Gastrocnemius medialis (tissue), 4 donors: ENCODE measurements at regions of chr13 and their contacts with region 1.

Region 1: DNA sequence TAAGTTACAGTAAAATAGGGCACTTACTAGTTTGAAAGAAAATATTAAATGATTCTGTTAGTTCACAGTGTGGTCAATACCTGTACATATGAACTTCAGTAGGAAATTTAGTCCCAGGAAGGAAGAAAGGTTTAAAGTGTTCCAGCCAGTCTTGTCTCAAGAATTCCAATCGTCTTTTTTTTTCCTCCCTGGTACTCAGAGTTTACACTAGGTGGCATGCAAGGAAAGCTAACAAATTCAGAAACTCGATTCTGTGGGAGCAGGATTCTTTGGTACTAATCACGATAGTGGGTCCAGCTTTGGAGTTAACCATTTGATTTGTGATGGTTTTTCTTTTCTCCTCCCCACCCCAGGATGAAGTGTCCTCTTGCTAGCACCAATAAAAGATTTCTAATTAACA is 43.6 kb downstream of the POLR1D start:
- DNase-seq: no peak
- ATAC-seq: no peak
- H3K4me3 ChIP-seq: no peak overlapping the region
- H3K27ac ChIP-seq: no peak overlapping the region
- H3K4me1 ChIP-seq: peaks cover 15 to 18% of the 10 kb centered on the region in 2 donors
- H3K27me3 ChIP-seq: no peaks in the 10 kb centered on the region
- CTCF ChIP-seq: peak in 1 of 5 experiments; percentile 11
- POLR2A ChIP-seq: no peak

Region 2: GRCh38 chr13:27620377-27621115 is 44.8 kb before region 1 on chr13 and contains the start of gene LNX2:
- in situ Hi-C with region 1: no loop called
- intact Hi-C with region 1: loop called (anchors 1 kb)
- DNase-seq: peak; percentile 98 to 99
- ATAC-seq: peak; percentile 72 to 73
- H3K4me3 ChIP-seq: peak within 1 kb of the TSS; percentile 69 to 98 (median 90)
- H3K27ac ChIP-seq: peak within 1 kb of the TSS; percentile 95 to 100 (median 99)
- H3K4me1 ChIP-seq: peaks cover 30 to 44% of the 10 kb centered on the region in 2 donors
- H3K27me3 ChIP-seq: no peaks in the 10 kb centered on the region
- CTCF ChIP-seq: peak in 2 of 5 experiments; percentile 24 to 29
- POLR2A ChIP-seq: peak; percentile 92 to 94
- total RNA-seq, gene LNX2: 5.0 to 7.1 (median 6.2) TPM

Region 3: DNA sequence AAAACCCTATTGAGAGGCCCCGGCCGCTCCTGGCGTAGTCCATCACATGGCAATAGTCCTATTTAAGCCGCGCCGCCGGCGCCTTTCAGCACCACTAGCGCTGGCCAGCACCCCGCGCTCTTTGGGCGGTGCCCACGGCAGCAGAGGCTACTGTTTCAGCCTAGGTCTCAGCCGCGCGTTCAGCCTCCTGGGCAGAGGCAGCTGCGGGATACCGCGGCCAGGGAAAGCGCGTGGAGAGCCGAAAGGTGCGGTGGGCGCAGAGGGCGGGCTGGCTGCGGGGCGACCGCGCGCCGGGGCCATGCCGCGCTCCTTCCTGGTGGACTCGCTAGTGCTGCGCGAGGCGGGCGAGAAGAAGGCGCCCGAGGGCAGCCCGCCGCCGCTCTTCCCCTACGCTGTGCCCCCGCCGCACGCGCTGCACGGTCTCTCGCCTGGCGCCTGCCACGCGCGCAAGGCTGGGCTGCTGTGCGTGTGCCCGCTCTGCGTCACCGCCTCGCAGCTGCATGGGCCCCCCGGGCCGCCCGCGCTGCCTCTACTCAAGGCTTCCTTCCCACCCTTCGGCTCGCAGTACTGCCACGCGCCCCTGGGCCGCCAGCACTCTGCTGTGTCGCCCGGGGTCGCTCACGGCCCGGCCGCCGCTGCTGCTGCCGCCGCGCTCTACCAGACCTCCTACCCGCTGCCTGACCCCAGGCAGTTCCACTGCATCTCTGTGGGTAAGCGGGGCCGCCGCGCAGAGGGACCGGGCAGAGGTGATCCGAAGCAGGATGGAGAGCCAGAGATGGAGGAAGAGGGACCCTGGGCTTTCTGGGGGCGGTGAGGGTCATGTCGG is 127.3 kb after region 1 on chr13 and contains the start of gene GSX1:
- in situ Hi-C with region 1: no loop called
- intact Hi-C with region 1: loop called (anchors 10 kb)
- DNase-seq: peak in 1 of 2 donors; percentile 19
- ATAC-seq: peak in 1 of 2 donors; percentile 39
- H3K4me3 ChIP-seq: peak within 1 kb of the TSS; percentile 22 to 50 (median 36)
- H3K27ac ChIP-seq: no peak within 1 kb of the TSS
- H3K4me1 ChIP-seq: peaks cover 20 to 34% of the 10 kb centered on the region in 2 donors
- H3K27me3 ChIP-seq: peaks cover 91 to 100% (median 95%) of the 10 kb centered on the region in 3 donors
- CTCF ChIP-seq: no peak
- POLR2A ChIP-seq: no peak
- total RNA-seq, gene GSX1: not detected